Activated B cell treated with CpG ODN at 0.5 μM for 24 hours (primary cell): ENCODE measurements at regions of chr5 and their contacts with region 1.

Region 1: GRCh38 chr5:127492854-127493738 is 24.3 kb upstream of the PRRC1 start:
- DNase-seq: no peak
- ATAC-seq: peak; percentile 54
- H3K4me3 Mint-ChIP-seq: no peak overlapping the region
- H3K27ac Mint-ChIP-seq: no peak overlapping the region
- H3K4me1 Mint-ChIP-seq: peaks cover 3% of the 10 kb centered on the region
- H3K27me3 Mint-ChIP-seq: peaks cover 8% of the 10 kb centered on the region
- CTCF ChIP-seq: peak; percentile 99

Region 2: DNA sequence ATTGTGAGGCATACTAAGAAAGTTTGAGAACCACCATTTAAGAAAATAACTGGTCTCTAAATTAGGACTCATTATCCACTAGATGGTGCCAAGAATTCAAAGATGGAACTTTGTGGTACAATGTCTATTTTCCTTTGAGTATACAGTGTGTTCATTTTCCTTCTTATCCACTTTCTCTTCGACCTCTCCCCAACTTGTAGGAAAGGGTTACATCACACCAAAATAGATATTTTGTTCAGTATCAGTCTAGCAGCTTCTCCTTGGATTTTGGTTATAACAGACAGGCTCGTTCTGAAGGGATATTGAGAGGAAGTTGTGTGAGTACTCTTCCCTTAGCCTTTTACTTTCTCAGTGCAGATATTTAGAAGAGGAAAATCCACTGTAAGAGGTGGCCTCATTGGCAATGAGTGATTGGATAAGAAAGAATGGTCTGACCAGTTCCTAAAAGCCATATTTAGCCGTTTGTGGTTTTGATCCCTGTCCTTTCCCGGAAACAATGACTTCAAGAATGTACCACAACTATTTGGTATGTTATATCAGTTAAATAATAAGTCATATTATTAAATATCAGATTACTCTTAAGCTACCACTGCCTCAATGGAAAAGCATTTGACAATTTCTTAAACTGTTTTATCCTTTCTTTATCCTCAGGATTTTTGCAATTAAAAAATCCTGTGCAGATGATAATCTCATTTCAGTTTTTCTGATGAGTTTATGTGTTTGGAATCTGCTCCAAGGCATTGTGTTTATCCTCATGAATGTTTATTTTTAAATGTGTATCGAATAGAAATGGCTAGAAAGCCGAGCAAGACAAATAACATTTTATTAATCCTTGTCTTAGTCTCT is 1138.9 kb before region 1 on chr5:
- CTCF ChIA-PET with region 1: no interaction called
- POLR2A ChIA-PET with region 1: no interaction called
- intact Hi-C with region 1: loop called (anchors 5 kb)
- DNase-seq: no peak
- ATAC-seq: peak; percentile 42
- H3K4me3 Mint-ChIP-seq: no peak overlapping the region
- H3K27ac Mint-ChIP-seq: no peak overlapping the region
- H3K4me1 Mint-ChIP-seq: peaks cover 4% of the 10 kb centered on the region
- H3K27me3 Mint-ChIP-seq: peaks cover 21% of the 10 kb centered on the region
- CTCF ChIP-seq: no peak

Region 3: GRCh38 chr5:126656396-126657007 is 836.6 kb before region 1 on chr5:
- CTCF ChIA-PET with region 1: interaction called, 5 read pairs
- POLR2A ChIA-PET with region 1: no interaction called
- intact Hi-C with region 1: loop called (anchors 1 kb)
- DNase-seq: no peak
- ATAC-seq: no peak
- H3K4me3 Mint-ChIP-seq: no peak overlapping the region
- H3K27ac Mint-ChIP-seq: no peak overlapping the region
- H3K4me1 Mint-ChIP-seq: peaks cover 6% of the 10 kb centered on the region
- H3K27me3 Mint-ChIP-seq: peaks cover 2% of the 10 kb centered on the region
- CTCF ChIP-seq: peak; percentile 51

Region 4: GRCh38 chr5:126808521-126808988 is 684.5 kb before region 1 on chr5:
- CTCF ChIA-PET with region 1: no interaction called
- POLR2A ChIA-PET with region 1: no interaction called
- intact Hi-C with region 1: loop called (anchors 10 kb)
- DNase-seq: no peak
- ATAC-seq: peak; percentile 66
- H3K4me3 Mint-ChIP-seq: peak overlapping the region; percentile 66
- H3K27ac Mint-ChIP-seq: peak overlapping the region; percentile 81
- H3K4me1 Mint-ChIP-seq: peaks cover 63% of the 10 kb centered on the region
- H3K27me3 Mint-ChIP-seq: no peaks in the 10 kb centered on the region
- CTCF ChIP-seq: peak; percentile 35

Region 5: DNA sequence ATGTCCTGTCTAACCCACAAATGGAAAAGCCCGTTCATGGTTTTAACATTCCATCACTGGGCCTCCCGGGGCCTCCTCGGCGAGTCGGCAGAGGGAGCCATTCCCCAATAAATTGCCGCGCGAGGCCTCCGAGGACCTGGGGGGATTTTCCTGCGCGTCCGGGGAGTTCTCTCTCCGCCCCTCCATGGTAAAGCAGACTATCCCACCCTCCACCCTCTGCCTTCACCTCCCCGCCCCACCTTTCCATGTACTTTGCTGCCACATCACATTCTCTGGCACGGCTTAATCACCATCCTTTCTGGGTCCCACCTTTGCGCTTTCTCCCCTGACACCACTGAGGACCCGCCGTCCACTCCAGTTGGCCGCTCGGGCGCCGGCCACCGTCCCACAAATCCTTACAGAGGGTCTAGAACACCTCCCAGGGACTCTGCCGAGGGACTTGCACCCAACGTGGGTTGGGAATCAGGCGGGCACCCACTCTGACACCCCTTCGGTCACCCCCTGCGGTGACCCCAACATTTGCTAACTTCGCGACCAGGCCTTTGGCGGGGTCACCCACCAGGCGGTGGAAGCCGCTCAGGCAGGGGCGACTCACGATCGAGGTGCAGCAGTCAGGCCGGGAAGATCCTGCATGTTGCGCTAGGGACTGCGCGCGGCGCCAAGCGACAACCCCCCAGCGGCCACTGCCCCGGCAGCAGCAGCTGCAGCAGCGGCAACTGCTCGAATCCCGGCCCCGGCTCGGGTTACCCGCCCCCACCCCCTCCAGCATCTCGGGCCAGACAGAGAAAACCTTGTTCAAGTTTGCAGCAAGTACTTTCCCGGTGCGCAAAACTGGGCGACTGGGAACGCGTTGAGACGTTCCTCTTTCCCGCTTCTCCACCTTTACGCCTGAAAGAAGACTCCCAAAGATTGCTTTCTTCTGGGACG is 202.8 kb before region 1 on chr5 and contains the start of gene MEGF10:
- CTCF ChIA-PET with region 1: no interaction called
- POLR2A ChIA-PET with region 1: no interaction called
- intact Hi-C with region 1: loop called (anchors 1 kb)
- DNase-seq: no peak
- ATAC-seq: no peak
- H3K4me3 Mint-ChIP-seq: peak within 1 kb of the TSS; percentile 5
- H3K27ac Mint-ChIP-seq: no peak within 1 kb of the TSS
- H3K4me1 Mint-ChIP-seq: peaks cover 14% of the 10 kb centered on the region
- H3K27me3 Mint-ChIP-seq: peaks cover 63% of the 10 kb centered on the region
- CTCF ChIP-seq: no peak
- total RNA-seq, gene MEGF10: not detected in 2 replicates